AG04450 (cell line): ENCODE measurements at regions of chr1 and their contacts with region 1.

Region 1: DNA sequence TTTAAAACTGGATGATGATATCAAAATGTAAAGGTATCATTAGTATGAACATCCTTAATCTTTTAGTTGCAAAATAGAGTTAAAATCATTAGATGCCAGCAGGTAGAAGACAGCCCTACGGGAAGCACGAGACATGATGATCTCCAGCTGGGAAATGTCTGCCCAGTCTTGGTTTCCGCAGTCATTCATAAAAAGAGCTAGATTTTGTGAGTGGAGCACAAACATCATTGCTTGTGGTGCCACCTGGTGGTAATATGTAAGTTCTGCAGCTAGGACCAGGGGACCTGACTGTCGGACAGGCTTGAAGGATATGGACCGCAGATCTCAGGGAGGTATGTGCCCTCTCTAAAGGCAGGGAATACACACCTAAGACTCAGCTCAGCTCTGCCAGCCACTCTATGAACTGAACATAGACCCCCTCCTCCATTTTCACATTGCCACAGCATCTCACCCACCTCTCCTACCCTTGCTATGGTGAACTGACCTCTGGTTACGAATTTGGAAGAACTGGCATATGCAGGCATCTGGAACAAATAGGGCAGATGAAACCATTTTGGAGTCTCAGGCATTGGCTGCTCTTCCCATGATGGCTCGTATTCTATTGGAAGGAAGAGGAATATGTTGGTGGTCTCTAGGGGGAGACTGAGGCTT is 9.2 kb downstream of the FCMR start:
- DNase-seq: peak; percentile 55
- H3K4me3 ChIP-seq: no peak overlapping the region
- H3K27ac ChIP-seq: no peak overlapping the region
- H3K27me3 ChIP-seq: peaks cover 14% of the 10 kb centered on the region
- CTCF ChIP-seq: peak; percentile 80

Region 2: DNA sequence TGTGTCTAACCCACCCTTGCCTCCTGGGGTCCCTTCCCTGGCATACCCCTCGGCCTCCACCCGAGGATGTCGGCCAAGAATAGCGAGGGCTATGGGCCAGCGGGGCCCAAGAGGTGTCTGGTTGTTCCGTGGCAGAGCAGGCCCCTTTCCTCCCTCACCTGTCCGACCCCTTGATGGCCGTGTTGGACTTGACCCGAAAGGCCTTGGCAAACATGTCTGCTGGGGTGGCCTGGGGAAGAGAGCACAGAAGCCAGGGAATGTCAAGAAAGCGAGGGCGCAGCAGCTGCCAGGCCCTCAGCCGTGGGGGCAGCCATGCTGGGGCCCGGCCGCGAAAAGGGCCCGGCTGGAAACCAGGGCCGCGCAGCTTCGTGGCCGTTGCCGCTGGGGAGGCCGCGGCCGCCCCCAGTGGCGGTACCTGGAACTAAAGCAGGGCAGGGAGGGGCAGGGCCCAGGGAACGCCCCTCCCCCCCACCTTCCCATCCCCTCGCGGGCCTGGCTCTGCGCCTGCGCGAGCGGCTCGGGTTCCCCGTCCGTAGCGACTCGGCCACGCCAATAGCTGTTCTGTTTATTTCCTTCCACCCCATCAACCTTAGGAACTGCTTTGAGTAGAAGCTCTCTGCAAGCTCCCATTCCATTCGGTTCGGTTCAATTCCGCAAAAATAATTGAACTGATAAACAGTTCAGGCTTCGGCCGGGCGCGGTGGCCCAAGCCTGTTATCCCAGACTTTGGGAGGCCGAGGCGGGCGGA is 300.3 kb before region 1 on chr1 and contains the start of gene EIF2D:
- CTCF ChIA-PET with region 1: interaction called, 25 read pairs
- POLR2A ChIA-PET with region 1: no interaction called
- DNase-seq: peak; percentile 73
- H3K4me3 ChIP-seq: peak within 1 kb of the TSS; percentile 93
- H3K27ac ChIP-seq: peak within 1 kb of the TSS; percentile 93
- H3K27me3 ChIP-seq: peaks cover 6% of the 10 kb centered on the region
- CTCF ChIP-seq: peak; percentile 91
- polyA plus RNA-seq, gene EIF2D: 71.8 and 74.0 TPM in 2 replicates

Region 3: DNA sequence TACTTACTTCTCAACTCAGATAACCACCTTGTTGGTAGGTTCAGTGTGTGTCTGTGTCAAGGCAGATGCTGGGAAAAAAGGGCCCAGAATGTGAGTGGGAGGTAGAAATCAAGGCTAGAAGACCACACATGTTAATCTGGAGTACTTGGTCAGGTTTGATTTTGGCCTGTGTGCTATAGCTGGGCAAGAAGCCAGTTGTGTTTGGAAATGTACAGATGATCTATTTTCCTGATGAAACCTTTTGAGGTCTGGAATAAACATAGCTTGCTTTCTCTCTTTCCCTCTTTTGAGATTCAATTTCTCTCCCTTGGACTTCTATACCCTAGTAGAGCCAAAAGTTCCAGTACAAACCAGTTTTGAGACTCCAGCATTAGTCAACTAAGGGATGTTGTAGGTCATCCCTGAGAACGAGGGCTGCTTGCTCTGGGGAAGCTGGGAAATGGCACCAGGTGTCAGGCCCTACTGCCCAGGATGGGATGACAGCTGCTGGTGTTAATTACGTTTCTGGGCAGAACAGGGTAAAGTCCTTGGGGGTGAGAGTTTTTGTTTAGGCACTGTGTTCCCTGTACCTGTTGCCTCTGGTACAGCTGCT is 212.0 kb before region 1 on chr1:
- CTCF ChIA-PET with region 1: interaction called, 12 read pairs
- POLR2A ChIA-PET with region 1: no interaction called
- DNase-seq: peak; percentile 33
- H3K4me3 ChIP-seq: no peak overlapping the region
- H3K27ac ChIP-seq: peak overlapping the region; percentile 52
- H3K27me3 ChIP-seq: no peaks in the 10 kb centered on the region
- CTCF ChIP-seq: no peak

Region 4: DNA sequence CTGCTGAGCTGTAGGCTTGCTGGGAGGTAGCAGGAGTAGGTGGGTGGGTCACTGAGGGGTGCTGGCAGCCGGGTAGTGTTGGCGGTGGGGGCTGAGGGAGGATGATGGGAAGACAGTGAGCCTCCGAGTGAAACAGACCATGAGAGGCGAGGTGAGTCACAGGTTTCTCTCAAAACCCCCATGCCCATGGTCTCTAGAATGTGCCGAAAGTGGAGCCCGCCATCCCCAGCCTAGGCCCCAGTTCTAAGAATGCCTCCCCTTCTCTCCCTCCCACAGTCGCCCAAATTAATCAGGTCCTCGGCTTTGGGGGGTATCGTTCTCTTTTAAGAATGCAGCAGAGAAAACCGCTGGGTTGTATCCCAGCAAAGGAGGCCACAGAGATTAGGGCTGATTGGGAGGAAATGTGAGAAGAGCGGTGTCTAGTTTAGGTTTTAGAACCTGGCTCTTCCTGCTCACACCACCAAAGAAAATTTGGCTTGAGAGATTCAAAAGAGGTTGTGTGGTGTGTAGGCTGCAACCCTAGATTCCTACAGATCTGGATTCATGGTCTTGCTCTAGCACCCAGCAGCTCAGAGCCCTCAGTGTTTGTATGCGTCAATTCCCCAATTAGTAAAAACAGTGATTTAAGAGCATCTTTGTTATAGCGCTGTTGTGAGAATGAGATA is 169.7 kb before region 1 on chr1:
- CTCF ChIA-PET with region 1: interaction called, 18 read pairs
- POLR2A ChIA-PET with region 1: no interaction called
- DNase-seq: no peak
- H3K4me3 ChIP-seq: no peak overlapping the region
- H3K27ac ChIP-seq: no peak overlapping the region
- H3K27me3 ChIP-seq: no peaks in the 10 kb centered on the region
- CTCF ChIP-seq: no peak

Region 5: DNA sequence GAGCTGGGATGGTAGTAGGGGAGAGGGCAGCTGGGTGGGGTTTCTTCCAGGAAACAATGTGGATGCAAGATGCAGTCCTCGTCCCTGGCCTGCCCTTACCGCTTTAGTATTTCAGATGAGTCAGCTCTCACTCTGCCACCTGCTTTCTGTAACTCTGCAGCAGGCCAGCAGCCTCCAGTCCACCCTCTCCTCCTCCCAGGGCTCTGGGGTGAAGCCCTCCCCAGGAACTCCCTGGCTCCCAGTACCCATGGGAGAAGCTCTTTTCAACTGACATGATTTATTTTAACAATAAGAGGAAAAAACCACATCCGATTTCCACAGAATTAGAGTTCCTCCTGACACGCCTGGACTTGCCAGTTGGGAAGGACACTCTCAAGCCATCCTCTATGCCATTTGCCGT is 86.2 kb before region 1 on chr1:
- CTCF ChIA-PET with region 1: interaction called, 21 read pairs
- POLR2A ChIA-PET with region 1: no interaction called
- DNase-seq: no peak
- H3K4me3 ChIP-seq: no peak overlapping the region
- H3K27ac ChIP-seq: no peak overlapping the region
- H3K27me3 ChIP-seq: no peaks in the 10 kb centered on the region
- CTCF ChIP-seq: no peak

Region 6: GRCh38 chr1:206887701-206888100 is 24.9 kb before region 1 on chr1:
- CTCF ChIA-PET with region 1: interaction called, 37 read pairs
- POLR2A ChIA-PET with region 1: no interaction called
- DNase-seq: no peak
- H3K4me3 ChIP-seq: no peak overlapping the region
- H3K27ac ChIP-seq: no peak overlapping the region
- H3K27me3 ChIP-seq: no peaks in the 10 kb centered on the region
- CTCF ChIP-seq: no peak

Region 7: GRCh38 chr1:207186503-207186902 is 273.9 kb after region 1 on chr1:
- CTCF ChIA-PET with region 1: no interaction called
- POLR2A ChIA-PET with region 1: no interaction called
- DNase-seq: no peak
- H3K4me3 ChIP-seq: no peak overlapping the region
- H3K27ac ChIP-seq: no peak overlapping the region
- H3K27me3 ChIP-seq: no peaks in the 10 kb centered on the region
- CTCF ChIP-seq: no peak

Region 8: GRCh38 chr1:207499573-207499972 is 587.0 kb after region 1 on chr1:
- CTCF ChIA-PET with region 1: interaction called, 10 read pairs
- POLR2A ChIA-PET with region 1: no interaction called
- DNase-seq: peak; percentile 10
- H3K4me3 ChIP-seq: no peak overlapping the region
- H3K27ac ChIP-seq: no peak overlapping the region
- H3K27me3 ChIP-seq: peaks cover 16% of the 10 kb centered on the region
- CTCF ChIP-seq: peak; percentile 76